Activated CD8-positive, alpha-beta T cell treated with anti-CD3 and anti-CD28 coated beads, Interleukin-2, amount 10 ng/mL, durations not matched to agents 7 days and 5 days (primary cell): ENCODE measurements at regions of chr4 and their contacts with region 1.

Region 1: GRCh38 chr4:48830706-48831531 is at the start of gene OCIAD1:
- DNase-seq: peak; percentile 98
- ATAC-seq: peak; percentile 98
- H3K4me3 Mint-ChIP-seq: peak within 1 kb of the TSS; percentile 100
- H3K27ac Mint-ChIP-seq: peak within 1 kb of the TSS; percentile 100
- H3K4me1 Mint-ChIP-seq: peaks cover 18% of the 10 kb centered on the region
- H3K27me3 Mint-ChIP-seq: no peaks in the 10 kb centered on the region
- total RNA-seq, gene OCIAD1: 92.4 to 93.7 TPM

Region 2: DNA sequence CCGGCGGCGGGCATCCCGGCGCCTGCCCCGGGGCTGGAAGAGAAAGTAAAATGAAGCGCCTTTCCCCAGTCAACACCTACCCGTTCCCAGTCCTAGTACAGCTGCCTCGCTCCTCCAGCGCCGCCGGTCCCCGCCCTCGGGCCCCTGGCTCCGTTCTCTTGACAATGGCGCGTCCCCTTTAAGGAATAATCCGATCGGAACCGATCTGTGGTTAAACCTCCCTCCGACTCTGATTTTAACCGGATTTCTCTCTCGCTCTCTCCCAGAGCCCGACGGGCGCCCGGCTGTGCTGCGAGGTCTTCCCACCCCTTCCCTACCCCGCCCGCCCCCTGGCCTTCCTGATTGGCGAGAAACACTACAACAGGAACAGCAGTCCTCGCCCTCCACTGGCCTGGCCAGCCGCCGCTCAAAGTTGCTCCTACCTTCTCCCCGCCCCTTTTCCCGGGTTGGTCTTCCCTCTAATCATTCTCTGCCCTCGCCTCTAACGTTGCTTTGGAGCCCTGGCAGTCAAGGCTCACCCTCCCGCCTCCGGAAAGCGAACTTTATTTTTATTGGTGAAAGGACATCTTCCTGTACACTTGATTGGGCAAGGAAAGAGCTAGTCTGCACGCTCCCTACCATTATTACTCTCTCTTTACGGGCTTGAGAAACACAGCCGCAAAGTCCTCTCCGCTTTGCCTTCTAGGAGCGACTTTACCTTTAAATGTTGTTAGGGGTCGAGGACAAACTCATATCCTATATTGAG is 50.7 kb before region 1 on chr4 and contains the start of gene FRYL:
- CTCF ChIA-PET with region 1: no interaction called
- POLR2A ChIA-PET with region 1: interaction called, 16 read pairs
- DNase-seq: peak; percentile 99
- ATAC-seq: peak; percentile 93
- H3K4me3 Mint-ChIP-seq: peak within 1 kb of the TSS; percentile 93
- H3K27ac Mint-ChIP-seq: peak within 1 kb of the TSS; percentile 92
- H3K4me1 Mint-ChIP-seq: peaks cover 43% of the 10 kb centered on the region
- H3K27me3 Mint-ChIP-seq: no peaks in the 10 kb centered on the region
- total RNA-seq, gene FRYL: 98.5 to 107 TPM